ENCODE measurements at regions of chr12 and their contacts with region 1.

Region 1: GRCh38 chr12:81128930-81129554 is 51.2 kb downstream of the ACSS3 start:
- DNase-seq: peak in 1 of 2 donors; percentile 22
- ATAC-seq: peak in 1 of 2 donors; percentile 81
- H3K4me3 ChIP-seq: no peak overlapping the region
- H3K27ac ChIP-seq: no peak overlapping the region
- H3K4me1 ChIP-seq: no peaks in the 10 kb centered on the region
- H3K27me3 ChIP-seq: no peaks in the 10 kb centered on the region
- CTCF ChIP-seq: peak; percentile 45 to 75 (median 68)
- POLR2A ChIP-seq: no peak

Region 2: GRCh38 chr12:80861623-80862378 is 267.2 kb before region 1 on chr12:
- in situ Hi-C with region 1: no loop called
- intact Hi-C with region 1: no loop called
- DNase-seq: no peak
- ATAC-seq: no peak
- H3K4me3 ChIP-seq: no peak overlapping the region
- H3K27ac ChIP-seq: no peak overlapping the region
- H3K4me1 ChIP-seq: no peaks in the 10 kb centered on the region
- H3K27me3 ChIP-seq: no peaks in the 10 kb centered on the region
- CTCF ChIP-seq: no peak
- POLR2A ChIP-seq: no peak

Region 3: DNA sequence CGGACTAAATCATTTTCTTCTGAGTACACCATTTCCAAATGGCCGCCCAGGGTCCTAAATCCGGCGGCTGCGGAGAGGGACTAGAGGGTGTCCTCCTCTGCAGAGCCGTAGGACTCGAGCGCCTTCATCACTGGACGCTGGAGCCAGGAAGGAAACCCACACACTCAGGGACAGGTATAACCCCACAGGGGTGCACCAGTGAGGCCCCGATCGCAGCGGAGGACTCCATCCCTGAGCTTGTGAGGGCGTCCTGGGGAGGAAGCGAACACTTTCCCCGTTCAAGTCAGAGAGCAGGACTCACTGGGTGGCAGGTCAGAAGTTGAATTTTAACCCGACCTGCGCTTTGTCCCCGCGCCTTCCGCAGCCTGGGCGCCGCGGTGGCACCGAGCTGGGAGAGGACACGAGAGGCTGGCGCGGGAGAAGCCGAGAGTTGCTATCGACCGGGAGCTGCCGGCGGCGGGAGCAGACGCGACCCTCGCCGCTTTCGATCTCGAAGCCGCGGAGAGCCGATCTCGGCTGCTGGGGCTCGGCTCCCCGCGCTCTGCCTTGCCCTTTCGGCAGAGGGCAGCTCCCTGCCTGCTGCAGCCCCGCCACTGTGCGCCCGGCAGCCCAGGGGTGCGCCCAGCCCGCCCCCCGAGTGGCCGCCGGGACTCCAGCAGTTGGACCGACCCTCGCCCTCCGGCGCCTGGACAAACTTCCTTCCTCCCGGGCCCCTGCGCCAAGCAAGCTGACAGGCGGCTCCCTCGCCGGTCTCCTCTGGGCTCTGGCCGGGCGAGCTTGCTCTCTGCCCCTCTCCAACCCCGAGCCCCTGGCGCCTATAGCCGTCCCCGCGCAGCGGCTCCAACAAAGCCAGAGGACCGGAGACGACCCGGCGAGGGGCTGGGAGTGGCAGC is 192.3 kb before region 1 on chr12:
- in situ Hi-C with region 1: no loop called
- intact Hi-C with region 1: loop called (anchors 10 kb)
- DNase-seq: no peak
- ATAC-seq: peak; percentile 51 to 67
- H3K4me3 ChIP-seq: peak overlapping the region; percentile 68 to 90 (median 80)
- H3K27ac ChIP-seq: peak overlapping the region; percentile 72 to 77 (median 73)
- H3K4me1 ChIP-seq: peaks cover 4% of the 10 kb centered on the region in 2 donors
- H3K27me3 ChIP-seq: peaks cover 0 to 7% (median 2%) of the 10 kb centered on the region in 3 donors
- CTCF ChIP-seq: no peak
- POLR2A ChIP-seq: no peak

Region 4: GRCh38 chr12:81530352-81530751 is 401.3 kb after region 1 on chr12:
- in situ Hi-C with region 1: no loop called
- intact Hi-C with region 1: no loop called
- DNase-seq: no peak
- ATAC-seq: no peak
- H3K4me3 ChIP-seq: no peak overlapping the region
- H3K27ac ChIP-seq: no peak overlapping the region
- H3K4me1 ChIP-seq: no peaks in the 10 kb centered on the region
- H3K27me3 ChIP-seq: no peaks in the 10 kb centered on the region
- CTCF ChIP-seq: no peak
- POLR2A ChIP-seq: no peak